Posterior cingulate gyrus (tissue), 11 donors: ENCODE measurements at regions of chr13 and their contacts with region 1.

Region 1: GRCh38 chr13:26497968-26498511 is 59.4 kb upstream of the WASF3 start:
- DNase-seq: no peak

Region 2: DNA sequence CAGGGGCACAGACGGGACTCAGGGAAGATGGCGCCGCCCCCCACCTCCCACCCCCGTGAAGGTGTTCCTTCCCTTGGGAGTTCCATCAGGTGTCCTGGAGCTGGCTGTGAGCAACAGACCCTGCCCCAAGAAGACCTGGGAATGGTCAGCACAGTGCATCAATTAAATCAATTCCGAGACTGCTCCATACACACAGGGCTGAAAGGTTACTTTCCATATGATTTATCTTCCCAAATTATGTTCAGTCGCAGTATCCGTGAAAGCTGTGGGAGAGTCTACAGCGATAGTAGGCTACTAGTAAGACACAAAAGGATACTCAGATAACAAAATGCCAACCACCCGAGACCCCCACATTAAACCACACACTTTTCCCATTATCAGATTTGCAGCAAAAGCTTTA is 1473.9 kb before region 1 on chr13:
- intact Hi-C with region 1: no loop called
- DNase-seq: no peak

Region 3: DNA sequence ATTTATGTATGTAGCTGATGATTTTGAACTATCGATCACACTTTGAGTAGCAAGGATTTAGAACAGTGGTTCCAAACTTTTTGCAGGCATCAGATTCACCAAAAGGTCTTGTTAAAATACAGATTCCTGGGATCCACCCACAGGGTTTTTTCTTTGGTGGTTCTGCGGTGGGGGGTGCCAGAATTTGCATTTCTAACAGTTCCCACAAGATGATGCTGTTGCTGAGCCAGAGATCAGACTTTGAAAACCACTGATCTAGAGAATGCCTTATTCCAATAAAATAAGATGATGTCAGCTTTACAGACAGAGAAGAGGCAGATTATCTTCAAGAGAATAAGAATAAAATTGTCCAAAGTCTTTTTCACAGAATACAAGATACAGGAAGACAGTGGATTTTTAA is 365.3 kb before region 1 on chr13:
- intact Hi-C with region 1: loop called (anchors 2 kb)
- DNase-seq: peak in 1 of 10 donors; percentile 4

Region 4: GRCh38 chr13:26382366-26382765 is 115.7 kb before region 1 on chr13:
- intact Hi-C with region 1: no loop called
- DNase-seq: no peak